ENCODE measurements at regions of chr1 and their contacts with region 1.

Region 1: GRCh38 chr1:114346480-114347029 is 164.4 kb downstream of the TRIM33 start:
- DNase-seq: peak; percentile 95 to 96 (median 96)
- ATAC-seq: peak; percentile 100
- H3K4me3 ChIP-seq: peak overlapping the region; percentile 51 to 62 (median 52)
- H3K27ac ChIP-seq: peak overlapping the region in 2 of 3 donors; percentile 29 to 51
- H3K4me1 ChIP-seq: peaks cover 0 to 7% (median 0%) of the 10 kb centered on the region in 4 donors
- H3K27me3 ChIP-seq: no peaks in the 10 kb centered on the region
- CTCF ChIP-seq: peak; percentile 100
- POLR2A ChIP-seq: no peak

Region 2: DNA sequence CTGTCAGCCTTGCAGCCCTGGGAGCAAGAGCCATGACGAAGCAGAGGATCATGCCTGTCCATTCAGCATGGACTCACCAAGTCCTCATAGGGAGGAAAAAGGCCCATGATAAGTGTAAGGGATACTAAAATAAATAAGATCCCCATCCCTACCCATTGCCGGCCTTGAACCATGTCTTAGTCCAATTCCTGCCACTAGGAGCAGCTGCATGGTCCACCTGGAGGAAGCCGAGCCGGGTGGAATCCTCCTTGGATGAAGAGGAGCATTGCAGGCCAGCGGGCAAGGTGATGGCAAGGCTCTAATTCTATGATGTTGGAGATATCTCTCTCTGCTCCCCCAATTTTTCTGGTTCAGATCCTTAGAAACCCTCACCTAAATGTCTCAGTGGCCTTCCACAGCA is 154.2 kb before region 1 on chr1:
- intact Hi-C with region 1: no loop called
- DNase-seq: no peak
- ATAC-seq: no peak
- H3K4me3 ChIP-seq: no peak overlapping the region
- H3K27ac ChIP-seq: no peak overlapping the region
- H3K4me1 ChIP-seq: no peaks in the 10 kb centered on the region
- H3K27me3 ChIP-seq: no peaks in the 10 kb centered on the region
- CTCF ChIP-seq: no peak
- POLR2A ChIP-seq: no peak

Region 3: GRCh38 chr1:114402843-114403242 is 56.3 kb after region 1 on chr1:
- intact Hi-C with region 1: loop called in 1 of 2 experiments (anchors 10 kb)
- DNase-seq: no peak
- ATAC-seq: no peak
- H3K4me3 ChIP-seq: no peak overlapping the region
- H3K27ac ChIP-seq: no peak overlapping the region
- H3K4me1 ChIP-seq: peaks cover 0 to 5% (median 0%) of the 10 kb centered on the region in 4 donors
- H3K27me3 ChIP-seq: no peaks in the 10 kb centered on the region
- CTCF ChIP-seq: no peak
- POLR2A ChIP-seq: no peak

Region 4: GRCh38 chr1:114418247-114418646 is 71.7 kb after region 1 on chr1:
- intact Hi-C with region 1: loop called in 1 of 2 experiments (anchors 10 kb)
- DNase-seq: no peak
- ATAC-seq: no peak
- H3K4me3 ChIP-seq: no peak overlapping the region
- H3K27ac ChIP-seq: no peak overlapping the region
- H3K4me1 ChIP-seq: no peaks in the 10 kb centered on the region
- H3K27me3 ChIP-seq: no peaks in the 10 kb centered on the region
- CTCF ChIP-seq: no peak
- POLR2A ChIP-seq: no peak

Region 5: GRCh38 chr1:114561333-114561732 is 214.8 kb after region 1 on chr1:
- intact Hi-C with region 1: loop called in 1 of 2 experiments (anchors 10 kb)
- DNase-seq: no peak
- ATAC-seq: no peak
- H3K4me3 ChIP-seq: no peak overlapping the region
- H3K27ac ChIP-seq: no peak overlapping the region
- H3K4me1 ChIP-seq: no peaks in the 10 kb centered on the region
- H3K27me3 ChIP-seq: no peaks in the 10 kb centered on the region
- CTCF ChIP-seq: no peak
- POLR2A ChIP-seq: no peak